Right cardiac atrium (tissue), 5 donors: ENCODE measurements at regions of chr22 and their contacts with region 1.

Region 1: GRCh38 chr22:45863981-45864751 is 112.8 kb downstream of the WNT7B start:
- DNase-seq: peak; percentile 69 to 87 (median 86)
- ATAC-seq: peak; percentile 58 to 65
- H3K4me3 ChIP-seq: no peak overlapping the region
- H3K27ac ChIP-seq: no peak overlapping the region
- H3K4me1 ChIP-seq: no peaks in the 10 kb centered on the region
- H3K27me3 ChIP-seq: no peaks in the 10 kb centered on the region

Region 2: DNA sequence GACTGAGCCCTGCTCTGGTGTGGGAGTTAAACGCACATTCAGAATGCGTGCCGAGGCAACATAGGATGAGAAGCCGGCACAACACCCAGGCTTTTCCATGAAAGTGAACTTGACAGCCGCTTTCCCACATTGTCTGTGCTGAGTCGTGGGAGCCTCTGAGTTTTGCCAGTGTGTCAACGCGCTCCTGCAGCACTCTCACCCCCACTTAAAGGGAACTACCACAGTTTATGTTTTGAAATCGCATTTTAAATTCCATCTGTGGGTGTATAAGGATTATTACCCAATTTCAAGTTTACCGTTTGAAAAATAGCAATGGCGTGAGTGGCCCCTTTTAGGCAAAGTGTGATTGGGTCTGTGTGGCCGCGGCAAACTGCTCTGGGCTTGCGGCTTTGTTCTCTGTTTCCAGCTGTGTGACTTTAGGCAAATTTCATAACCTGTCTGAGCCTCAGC is 280.0 kb before region 1 on chr22:
- intact Hi-C with region 1: loop called in 1 of 4 experiments (anchors 10 kb)
- DNase-seq: peak in 2 of 3 donors; percentile 14
- ATAC-seq: no peak
- H3K4me3 ChIP-seq: no peak overlapping the region
- H3K27ac ChIP-seq: no peak overlapping the region
- H3K4me1 ChIP-seq: no peaks in the 10 kb centered on the region
- H3K27me3 ChIP-seq: no peaks in the 10 kb centered on the region

Region 3: GRCh38 chr22:45645526-45646414 is 218.4 kb before region 1 on chr22:
- intact Hi-C with region 1: loop called in 2 of 4 experiments (anchors 5 to 10 kb)
- DNase-seq: peak; percentile 66 to 91 (median 89)
- ATAC-seq: peak; percentile 92 to 94
- H3K4me3 ChIP-seq: no peak overlapping the region
- H3K27ac ChIP-seq: no peak overlapping the region
- H3K4me1 ChIP-seq: no peaks in the 10 kb centered on the region
- H3K27me3 ChIP-seq: peaks cover 2% of the 10 kb centered on the region

Region 4: GRCh38 chr22:45977003-45977411 is 112.8 kb after region 1 on chr22 and contains the start of gene WNT7B:
- intact Hi-C with region 1: loop called in 1 of 4 experiments (anchors 2 kb)
- DNase-seq: no peak
- ATAC-seq: no peak
- H3K4me3 ChIP-seq: peak within 1 kb of the TSS; percentile 43
- H3K27ac ChIP-seq: no peak within 1 kb of the TSS
- H3K4me1 ChIP-seq: no peaks in the 10 kb centered on the region
- H3K27me3 ChIP-seq: no peaks in the 10 kb centered on the region
- total RNA-seq, gene WNT7B: not detected